Activated CD8-positive, alpha-beta T cell treated with anti-CD3 and anti-CD28 coated beads for 36 hours (primary cell): ENCODE measurements at regions of chr3 and their contacts with region 1.

Region 1: GRCh38 chr3:101381809-101382208 is 61.4 kb upstream of the IMPG2 start:
- DNase-seq: no peak
- ATAC-seq: peak; percentile 47
- H3K4me3 Mint-ChIP-seq: no peak overlapping the region
- H3K27ac Mint-ChIP-seq: no peak overlapping the region
- H3K4me1 Mint-ChIP-seq: peaks cover 48% of the 10 kb centered on the region
- H3K27me3 Mint-ChIP-seq: no peaks in the 10 kb centered on the region
- CTCF ChIP-seq: peak; percentile 69

Region 2: DNA sequence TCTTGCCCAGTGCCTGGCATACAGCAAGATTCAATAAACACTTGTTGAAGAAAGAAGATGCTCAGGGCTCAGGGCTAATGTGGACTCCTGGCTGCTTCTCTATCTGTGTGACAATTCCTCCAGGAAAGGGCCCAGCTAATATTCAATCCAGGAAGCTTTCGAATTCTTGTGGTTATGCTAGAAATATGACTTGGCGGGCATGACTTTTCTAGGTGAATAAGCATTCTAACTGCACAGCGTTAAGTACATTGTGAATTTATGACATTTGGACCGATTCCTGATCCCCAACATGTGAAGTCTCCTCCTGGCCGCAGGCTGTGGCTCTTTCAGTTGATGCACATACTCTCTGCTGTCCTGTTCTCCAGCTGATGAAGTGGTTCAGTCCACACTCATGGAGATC is 178.4 kb before region 1 on chr3:
- CTCF ChIA-PET with region 1: no interaction called
- POLR2A ChIA-PET with region 1: no interaction called
- intact Hi-C with region 1: loop called (anchors 10 kb)
- DNase-seq: no peak
- ATAC-seq: no peak
- H3K4me3 Mint-ChIP-seq: no peak overlapping the region
- H3K27ac Mint-ChIP-seq: no peak overlapping the region
- H3K4me1 Mint-ChIP-seq: no peaks in the 10 kb centered on the region
- H3K27me3 Mint-ChIP-seq: peaks cover 17% of the 10 kb centered on the region
- CTCF ChIP-seq: no peak

Region 3: DNA sequence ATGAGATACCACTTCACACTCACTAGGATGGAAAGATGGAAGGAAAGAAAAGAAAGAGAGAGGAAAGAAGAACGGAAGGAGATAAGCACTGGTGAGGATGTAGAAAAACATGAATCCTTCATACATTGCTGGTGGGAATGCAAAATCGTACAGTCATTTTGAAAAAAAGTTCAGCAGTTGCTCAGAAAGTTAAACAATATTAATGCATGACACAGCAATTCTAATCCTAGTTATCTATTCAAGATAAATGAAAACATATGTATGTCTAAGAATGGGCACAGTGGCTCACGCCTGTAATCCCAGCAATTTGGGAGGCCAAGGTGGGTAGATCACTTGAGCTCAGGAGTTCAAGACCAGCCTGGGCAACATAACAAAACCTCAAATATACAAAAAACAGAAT is 72.2 kb after region 1 on chr3:
- CTCF ChIA-PET with region 1: no interaction called
- POLR2A ChIA-PET with region 1: no interaction called
- intact Hi-C with region 1: no loop called
- DNase-seq: no peak
- ATAC-seq: no peak
- H3K4me3 Mint-ChIP-seq: no peak overlapping the region
- H3K27ac Mint-ChIP-seq: no peak overlapping the region
- H3K4me1 Mint-ChIP-seq: peaks cover 17% of the 10 kb centered on the region
- H3K27me3 Mint-ChIP-seq: no peaks in the 10 kb centered on the region
- CTCF ChIP-seq: no peak